Kidney (tissue), 22 donors: ENCODE measurements at regions of chr11 and their contacts with region 1.

Region 1: GRCh38 chr11:63838678-63839507 is at the start of gene MARK2:
- DNase-seq: peak; percentile 99
- H3K4me3 ChIP-seq: peak within 1 kb of the TSS; percentile 71 to 88 (median 74)
- H3K27ac ChIP-seq: peak within 1 kb of the TSS; percentile 75
- H3K4me1 ChIP-seq: peaks cover 3 to 25% (median 14%) of the 10 kb centered on the region in 3 donors
- H3K27me3 ChIP-seq: no peaks in the 10 kb centered on the region
- CTCF ChIP-seq: peak; percentile 10
- total RNA-seq, gene MARK2: 42.6 TPM

Region 2: DNA sequence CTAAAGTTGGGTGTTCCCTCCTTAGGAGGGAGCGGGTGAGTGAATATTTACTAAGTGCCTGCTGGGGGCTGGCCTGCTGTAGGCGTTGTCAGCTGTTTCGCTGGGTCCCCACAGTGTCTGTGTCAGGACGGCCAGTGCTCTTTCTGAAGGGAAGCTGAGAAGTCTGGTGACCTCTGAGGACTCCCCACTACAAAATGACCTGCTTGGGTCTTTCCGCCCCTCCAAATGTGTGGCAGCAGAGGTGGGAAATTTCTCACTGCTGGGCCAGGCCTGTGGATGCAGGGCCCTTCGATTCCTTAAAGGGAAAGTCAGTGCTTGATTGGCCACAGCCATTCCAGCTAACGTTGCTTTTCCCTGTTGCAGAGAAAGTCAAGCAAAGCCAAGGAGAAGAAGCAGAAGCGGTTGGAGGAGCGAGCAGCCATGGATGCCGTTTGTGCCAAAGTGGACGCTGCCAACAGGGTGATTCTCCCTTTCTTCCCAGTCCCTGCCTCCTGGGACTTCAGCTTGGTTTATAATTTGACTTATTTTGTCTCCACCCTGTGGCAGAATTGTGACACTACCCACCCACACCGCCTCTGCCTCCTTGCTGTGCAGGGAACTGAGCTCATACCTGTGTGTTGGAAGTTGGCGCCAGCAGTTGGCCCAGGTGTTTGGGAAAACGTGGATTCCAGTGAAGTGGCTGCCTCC is 106.7 kb after region 1 on chr11:
- intact Hi-C with region 1: loop called (anchors 5 kb)
- DNase-seq: peak; percentile 81 to 89 (median 82)
- H3K4me3 ChIP-seq: peak overlapping the region; percentile 18 to 43 (median 31)
- H3K27ac ChIP-seq: peak overlapping the region in 1 of 2 donors; percentile 36
- H3K4me1 ChIP-seq: peaks cover 0 to 4% (median 0%) of the 10 kb centered on the region in 3 donors
- H3K27me3 ChIP-seq: no peaks in the 10 kb centered on the region
- CTCF ChIP-seq: peak; percentile 83